ENCODE measurements at regions of chr6 and their contacts with region 1.

Region 1: DNA sequence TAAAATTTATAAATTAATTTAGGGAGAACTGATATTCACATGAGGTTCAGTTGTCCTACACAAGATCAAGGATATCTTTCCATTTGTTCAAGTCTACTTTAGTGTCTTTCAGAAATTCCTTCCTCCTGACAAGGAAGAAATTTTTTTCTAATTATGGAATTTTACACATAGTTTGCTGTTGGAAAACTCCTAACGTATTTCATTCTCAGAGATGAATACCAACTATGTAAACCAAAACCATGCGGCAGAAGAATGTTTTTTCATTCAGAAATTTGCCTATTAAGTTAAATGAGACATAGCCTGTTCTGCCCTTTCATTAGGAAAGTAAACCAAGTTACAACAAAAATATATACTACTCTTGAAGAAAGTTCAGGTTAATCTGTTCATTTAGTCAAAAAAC is 111.2 kb upstream of the PRDM1 start:
- DNase-seq: no peak
- ATAC-seq: no peak

Region 2: DNA sequence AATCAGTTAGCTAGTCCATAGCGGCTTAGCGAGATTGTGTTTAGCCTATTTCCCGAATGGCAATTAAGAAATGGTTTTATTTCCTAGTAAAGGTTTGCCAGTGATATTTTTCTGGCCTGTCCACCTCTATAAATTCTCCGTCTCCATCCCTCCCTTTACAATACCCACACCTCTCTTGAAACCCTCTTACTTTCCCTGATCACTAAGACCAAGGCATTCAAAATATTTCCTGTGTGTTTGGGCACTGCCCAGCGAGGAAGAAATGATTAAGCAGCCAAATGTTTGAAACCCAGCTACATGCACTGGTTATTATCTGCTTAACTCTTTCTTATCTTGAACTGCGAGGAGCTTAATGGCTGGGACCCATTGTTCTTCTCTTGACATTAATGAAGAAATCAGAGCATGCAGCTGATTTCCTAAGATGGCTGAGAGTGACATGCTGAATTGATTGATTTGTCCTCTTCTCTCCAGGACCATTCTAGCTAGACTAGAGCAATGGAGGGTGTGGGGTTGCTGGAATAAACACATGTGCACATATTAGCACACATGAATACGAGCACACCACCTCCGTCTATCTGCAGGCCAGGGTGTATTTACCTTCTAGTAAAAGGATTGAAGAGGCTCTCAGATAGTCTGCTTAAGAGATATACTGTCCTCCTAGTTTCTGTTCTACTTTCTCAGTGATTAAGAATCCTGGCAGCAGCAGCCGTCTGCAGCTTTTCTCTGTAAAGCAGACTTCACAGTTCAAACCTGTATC is 65.0 kb after region 1 on chr6:
- intact Hi-C with region 1: loop called (anchors 2 kb)
- DNase-seq: no peak
- ATAC-seq: no peak

Region 3: GRCh38 chr6:106097411-106098231 is 122.6 kb after region 1 on chr6:
- intact Hi-C with region 1: no loop called
- DNase-seq: no peak
- ATAC-seq: peak; percentile 63

Measured in sciatic nerve (tissue), 2 donors.